ENCODE measurements at regions of chr2 and their contacts with region 1.

Region 1: GRCh38 chr2:182920631-182921056 is 54.2 kb upstream of the FRZB start:
- DNase-seq: no peak
- ATAC-seq: no peak

Region 2: GRCh38 chr2:182845794-182846417 is 74.7 kb before region 1 on chr2:
- intact Hi-C with region 1: no loop called
- DNase-seq: no peak
- ATAC-seq: no peak

Region 3: DNA sequence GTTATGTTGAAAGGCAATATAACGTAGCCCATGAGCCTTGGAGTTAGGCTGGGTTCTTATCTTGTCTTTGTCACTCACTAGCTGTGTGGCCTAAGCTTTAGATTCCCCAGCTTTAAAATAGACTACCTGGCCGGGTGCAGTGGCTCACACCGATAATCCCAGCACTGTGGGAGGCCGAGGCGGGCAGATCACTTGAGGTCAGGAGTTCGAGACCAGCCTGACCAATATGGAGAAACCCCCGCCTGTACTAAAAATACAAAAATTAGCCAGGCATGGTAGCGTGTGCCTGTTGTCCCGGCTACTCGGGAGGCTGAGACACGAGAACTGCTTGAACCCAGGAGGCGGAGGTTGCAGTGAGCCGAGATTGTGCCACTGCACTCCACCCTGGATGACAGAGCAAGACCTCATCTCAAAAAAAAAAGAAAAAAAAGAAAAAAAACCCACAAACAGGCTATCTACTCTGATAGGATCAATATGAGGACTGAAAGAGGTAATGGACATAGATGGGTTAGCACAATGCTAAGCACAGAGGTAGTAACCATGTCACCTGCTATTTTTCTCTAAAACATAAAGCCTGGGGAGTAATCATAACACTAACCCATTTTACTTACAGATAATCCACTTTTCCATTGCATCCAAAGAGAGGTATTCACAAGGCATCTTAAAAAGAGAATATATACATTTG is 73.7 kb after region 1 on chr2:
- intact Hi-C with region 1: loop called in 1 of 2 experiments (anchors 10 kb)
- DNase-seq: no peak
- ATAC-seq: no peak

Measured in left cardiac atrium (tissue), 4 donors.